ENCODE measurements at regions of chr15 and their contacts with region 1.

Region 1: DNA sequence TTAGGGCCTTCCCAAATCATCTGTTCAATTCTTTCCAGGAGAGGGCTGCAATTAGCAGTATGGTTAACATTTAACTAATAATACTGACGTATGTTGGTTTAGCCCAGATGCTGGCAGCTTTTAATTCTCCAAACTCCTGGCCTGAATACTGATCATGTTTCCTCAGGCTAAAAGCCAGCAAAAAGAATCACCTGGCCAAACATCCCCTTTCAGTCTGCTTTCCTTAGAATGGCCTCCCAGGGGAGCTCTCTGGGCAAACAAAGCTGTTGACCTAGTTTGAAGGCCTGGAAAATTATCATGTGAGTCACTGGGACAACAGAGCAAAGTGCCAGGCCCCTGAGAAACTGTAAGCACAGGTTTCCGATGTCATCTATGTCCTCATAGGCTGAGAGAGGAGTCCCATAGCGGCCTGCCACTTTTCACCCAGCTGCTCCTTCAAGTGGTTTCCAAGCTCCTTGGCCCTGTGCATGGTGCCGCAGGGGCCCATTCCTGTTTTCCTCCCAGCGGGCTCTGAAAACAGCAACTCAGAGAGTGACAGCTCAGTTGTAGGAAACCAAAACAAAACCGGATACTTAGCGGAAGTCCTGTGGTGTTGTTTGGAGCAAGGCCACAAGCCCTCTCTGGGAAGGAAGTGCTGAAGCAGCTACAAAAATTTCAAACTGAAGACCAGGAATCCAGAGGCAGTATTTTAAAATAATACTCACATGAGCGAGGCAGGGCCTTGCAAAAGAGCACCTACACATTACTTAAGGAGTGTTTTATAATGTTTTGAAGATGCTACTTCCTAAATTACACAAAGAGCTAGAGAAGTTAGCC is 36.5 kb upstream of the RAB11A start:
- DNase-seq: peak; percentile 74 to 92
- ATAC-seq: peak; percentile 91 to 97 (median 95)
- H3K4me3 ChIP-seq: peak overlapping the region in 8 of 10 donors; percentile 3 to 43 (median 26)
- H3K27ac ChIP-seq: peak overlapping the region; percentile 50 to 91 (median 80)
- H3K4me1 ChIP-seq: peaks cover 9 to 74% (median 32%) of the 10 kb centered on the region in 9 donors
- H3K27me3 ChIP-seq: no peaks in the 10 kb centered on the region
- CTCF ChIP-seq: peak in 3 of 9 donors; percentile 12 to 40 (median 39)

Region 2: GRCh38 chr15:65792130-65792987 is 40.4 kb before region 1 on chr15 and contains the start of gene DENND4A:
- intact Hi-C with region 1: loop called in 6 of 10 experiments (anchors 1 to 5 kb)
- DNase-seq: peak; percentile 98
- ATAC-seq: peak; percentile 95 to 99 (median 98)
- H3K4me3 ChIP-seq: peak within 1 kb of the TSS; percentile 73 to 97 (median 92)
- H3K27ac ChIP-seq: peak within 1 kb of the TSS; percentile 85 to 99 (median 96)
- H3K4me1 ChIP-seq: peaks cover 0 to 57% (median 23%) of the 10 kb centered on the region in 9 donors
- H3K27me3 ChIP-seq: no peaks in the 10 kb centered on the region
- CTCF ChIP-seq: no peak
- total RNA-seq, gene DENND4A: 12.4 to 23.8 (median 16.9) TPM

Region 3: DNA sequence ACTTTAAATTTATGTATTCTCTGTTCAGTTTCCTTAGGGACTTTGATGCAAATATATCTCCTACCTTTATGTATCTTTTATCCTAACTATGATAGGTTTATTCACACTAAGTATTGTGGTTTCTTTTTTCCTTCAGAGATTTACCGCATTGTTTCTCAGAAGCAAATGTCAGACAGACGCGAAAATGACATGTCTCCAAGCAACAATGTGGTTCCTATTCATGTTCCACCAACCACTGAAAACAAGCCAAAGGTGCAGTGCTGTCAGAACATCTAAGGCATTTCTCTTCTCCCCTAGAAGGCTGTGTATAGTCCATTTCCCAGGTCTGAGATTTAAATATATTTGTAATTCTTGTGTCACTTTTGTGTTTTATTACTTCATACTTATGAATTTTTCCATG is 54.8 kb after region 1 on chr15:
- intact Hi-C with region 1: no loop called
- DNase-seq: no peak
- ATAC-seq: no peak
- H3K4me3 ChIP-seq: no peak overlapping the region
- H3K27ac ChIP-seq: no peak overlapping the region
- H3K4me1 ChIP-seq: peaks cover 0 to 31% (median 5%) of the 10 kb centered on the region in 9 donors
- H3K27me3 ChIP-seq: no peaks in the 10 kb centered on the region
- CTCF ChIP-seq: no peak

Region 4: GRCh38 chr15:65902378-65902777 is 69.6 kb after region 1 on chr15:
- intact Hi-C with region 1: no loop called
- DNase-seq: peak in 1 of 2 donors; percentile 34
- ATAC-seq: peak; percentile 69 to 92 (median 84)
- H3K4me3 ChIP-seq: no peak overlapping the region
- H3K27ac ChIP-seq: peak overlapping the region in 1 of 10 donors; percentile 13
- H3K4me1 ChIP-seq: peaks cover 0 to 46% (median 14%) of the 10 kb centered on the region in 9 donors
- H3K27me3 ChIP-seq: no peaks in the 10 kb centered on the region
- CTCF ChIP-seq: no peak

Region 5: GRCh38 chr15:67135497-67135893 is 1302.7 kb after region 1 on chr15:
- intact Hi-C with region 1: loop called in 1 of 10 experiments (anchors 5 kb)
- DNase-seq: no peak
- ATAC-seq: no peak
- H3K4me3 ChIP-seq: no peak overlapping the region
- H3K27ac ChIP-seq: peak overlapping the region in 8 of 10 donors; percentile 63 to 89 (median 81)
- H3K4me1 ChIP-seq: peaks cover 22 to 96% (median 89%) of the 10 kb centered on the region in 9 donors
- H3K27me3 ChIP-seq: no peaks in the 10 kb centered on the region
- CTCF ChIP-seq: no peak